Motor neuron (in vitro differentiated cells): ENCODE measurements at regions of chr5 and their contacts with region 1.

Region 1: DNA sequence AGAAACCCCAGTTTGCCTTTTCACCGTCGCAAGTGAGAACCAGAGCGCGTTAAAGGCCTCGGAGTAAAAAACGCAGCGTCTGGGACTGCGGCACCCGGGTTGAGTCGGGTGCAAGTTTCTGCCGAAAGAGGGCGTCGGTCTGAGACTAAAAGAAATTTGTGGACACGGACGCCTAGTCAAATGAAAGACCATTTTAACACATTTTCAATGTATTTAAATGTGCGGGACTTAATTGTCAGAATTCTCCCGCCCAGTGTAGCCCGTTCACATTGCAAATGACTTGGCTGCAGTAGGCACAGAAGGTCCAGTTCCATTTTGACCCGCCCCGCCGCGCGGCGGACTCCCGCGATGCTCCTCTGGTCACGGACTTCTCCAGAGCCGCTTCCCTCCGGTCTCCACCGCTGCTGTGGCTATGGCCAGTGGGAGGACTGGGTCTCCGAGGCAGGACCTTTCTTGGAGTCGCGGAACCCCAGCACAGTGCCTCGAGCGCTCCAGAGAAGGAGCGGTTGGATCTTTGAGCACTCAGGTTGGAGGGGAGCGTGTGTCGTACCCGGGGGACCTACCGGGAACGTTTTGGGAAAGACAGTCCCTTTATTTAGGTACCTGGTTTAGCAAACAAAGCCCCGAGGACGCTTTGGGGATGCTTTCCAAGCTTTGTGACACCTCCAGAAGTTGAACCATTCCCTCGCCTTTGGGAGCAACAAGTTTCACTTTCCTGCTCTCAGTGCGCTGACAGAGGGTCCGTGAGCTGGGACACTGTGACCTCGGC is 1.2 kb upstream of the NPR3 start:
- ATAC-seq: peak; percentile 77 to 84 (median 81)
- H3K4me3 ChIP-seq: peak overlapping the region; percentile 35 to 48 (median 42)
- H3K27ac ChIP-seq: no peak overlapping the region
- H3K4me1 ChIP-seq: peaks cover 2 to 23% of the 10 kb centered on the region in 2 donors

Region 2: GRCh38 chr5:33105521-33105941 is 395.6 kb after region 1 on chr5:
- in situ Hi-C with region 1: no loop called
- ATAC-seq: peak in 1 of 8 experiments; percentile 36
- H3K4me3 ChIP-seq: no peak overlapping the region
- H3K27ac ChIP-seq: no peak overlapping the region
- H3K4me1 ChIP-seq: no peaks in the 10 kb centered on the region

Region 3: DNA sequence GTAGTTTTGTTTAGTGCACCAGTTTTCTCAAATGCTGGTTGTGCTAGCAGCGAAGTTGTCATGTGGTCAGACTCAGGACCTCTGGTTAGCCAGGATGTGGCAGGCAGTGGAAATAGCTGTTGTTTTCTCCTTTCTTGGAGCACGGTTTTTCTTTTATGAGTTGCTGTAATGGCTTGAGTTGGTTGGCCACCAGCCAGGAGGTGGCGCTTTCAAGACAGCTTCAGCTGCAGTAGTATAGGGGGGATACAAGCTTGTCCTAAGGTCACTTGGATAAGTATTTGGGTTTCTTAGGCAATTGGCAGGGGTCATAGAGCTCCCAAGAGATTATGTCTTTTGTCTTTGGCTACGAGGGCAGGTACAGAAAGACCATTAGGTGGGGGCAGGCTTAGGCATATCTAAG is 456.6 kb after region 1 on chr5:
- in situ Hi-C with region 1: loop called in 1 of 9 experiments (anchors 25 kb)
- ATAC-seq: no peak
- H3K4me3 ChIP-seq: no peak overlapping the region
- H3K27ac ChIP-seq: no peak overlapping the region
- H3K4me1 ChIP-seq: no peaks in the 10 kb centered on the region

Region 4: DNA sequence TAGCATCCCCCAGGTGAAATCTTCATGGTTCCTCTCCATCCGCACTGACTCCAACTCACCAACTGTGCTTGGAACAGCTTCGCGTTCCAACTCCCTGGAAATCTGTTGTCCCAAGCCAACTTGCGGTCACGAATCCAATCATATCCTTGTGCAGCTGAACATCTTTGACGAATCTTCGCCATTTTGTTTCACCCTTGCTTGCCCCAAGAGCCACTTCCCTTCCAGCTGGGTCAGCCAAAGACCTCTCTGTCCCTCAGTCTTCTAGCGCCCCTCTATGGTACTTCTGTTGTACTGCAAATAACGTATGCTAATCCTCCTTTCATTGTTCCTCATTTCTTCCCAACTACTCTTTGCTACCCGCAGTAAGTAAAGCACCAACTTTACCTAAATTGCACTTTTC is 669.8 kb after region 1 on chr5:
- in situ Hi-C with region 1: loop called in 1 of 9 experiments (anchors 25 kb)
- ATAC-seq: peak in 3 of 8 experiments; percentile 32 to 58 (median 52)
- H3K4me3 ChIP-seq: no peak overlapping the region
- H3K27ac ChIP-seq: no peak overlapping the region
- H3K4me1 ChIP-seq: no peaks in the 10 kb centered on the region

Region 5: DNA sequence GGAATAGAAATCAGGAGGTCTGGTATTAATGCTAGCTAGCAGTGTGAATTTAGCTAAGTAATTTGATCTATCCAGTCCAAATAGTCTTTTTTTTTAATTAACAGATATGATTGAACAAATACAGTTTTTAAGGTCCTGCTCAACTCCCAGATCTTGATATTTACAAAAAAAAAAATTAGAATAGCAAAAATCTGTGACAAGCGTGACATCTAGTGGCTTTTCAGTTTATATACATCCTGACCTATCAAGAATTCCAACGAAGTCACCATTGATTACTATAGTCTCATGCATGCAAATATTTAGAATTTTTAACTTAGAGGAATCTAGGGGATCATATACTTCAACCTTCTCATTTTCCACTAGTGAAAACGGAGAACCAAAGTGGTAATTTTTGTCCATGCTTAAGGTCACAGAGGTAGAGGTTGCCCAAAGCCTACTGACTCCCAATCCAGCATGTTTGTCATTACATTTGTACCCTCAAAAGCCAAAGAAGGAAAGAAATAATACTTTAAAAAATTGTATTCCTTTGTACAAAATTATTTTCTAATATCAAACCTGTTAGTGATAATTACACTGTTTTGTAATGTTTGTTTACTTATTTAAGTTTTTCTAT is 713.2 kb after region 1 on chr5:
- in situ Hi-C with region 1: loop called in 1 of 9 experiments (anchors 25 kb)
- ATAC-seq: peak in 3 of 8 experiments; percentile 23 to 37 (median 35)
- H3K4me3 ChIP-seq: no peak overlapping the region
- H3K27ac ChIP-seq: no peak overlapping the region
- H3K4me1 ChIP-seq: no peaks in the 10 kb centered on the region